Naive thymus-derived CD4-positive, alpha-beta T cell (primary cell): ENCODE measurements at regions of chr3 and their contacts with region 1.

Region 1: GRCh38 chr3:112086076-112086854 is at the start of gene C3orf52:
- DNase-seq: peak; percentile 37 to 84 (median 49)
- ATAC-seq: peak; percentile 89
- H3K4me3 ChIP-seq: peak within 1 kb of the TSS; percentile 64
- H3K4me3 Mint-ChIP-seq: peak within 1 kb of the TSS; percentile 81 to 91 (median 86)
- H3K27ac ChIP-seq: peak within 1 kb of the TSS; percentile 50
- H3K27ac Mint-ChIP-seq: peak within 1 kb of the TSS; percentile 25 to 89 (median 77)
- H3K4me1 ChIP-seq: peaks cover 8 to 10% of the 10 kb centered on the region in 2 donors
- H3K4me1 Mint-ChIP-seq: peaks cover 32 to 66% (median 46%) of the 10 kb centered on the region in 7 donors
- H3K27me3 ChIP-seq: no peaks in the 10 kb centered on the region
- H3K27me3 Mint-ChIP-seq: peaks cover 0 to 17% (median 3%) of the 10 kb centered on the region in 5 donors
- total RNA-seq, gene C3orf52: 1.2 to 12.3 (median 1.9) TPM

Region 2: GRCh38 chr3:111989061-111989678 is 97.1 kb before region 1 on chr3:
- CTCF ChIA-PET with region 1: no interaction called
- POLR2A ChIA-PET with region 1: no interaction called
- intact Hi-C with region 1: loop called in 1 of 2 experiments (anchors 1 kb)
- DNase-seq: peak in 3 of 9 donors; percentile 21 to 32 (median 32)
- ATAC-seq: peak; percentile 87
- H3K4me3 ChIP-seq: no peak overlapping the region
- H3K4me3 Mint-ChIP-seq: no peak overlapping the region
- H3K27ac ChIP-seq: no peak overlapping the region
- H3K27ac Mint-ChIP-seq: peak overlapping the region in 1 of 9 donors; percentile 30
- H3K4me1 ChIP-seq: no peaks in the 10 kb centered on the region
- H3K4me1 Mint-ChIP-seq: peaks cover 11 to 44% (median 35%) of the 10 kb centered on the region in 7 donors
- H3K27me3 ChIP-seq: no peaks in the 10 kb centered on the region
- H3K27me3 Mint-ChIP-seq: no peaks in the 10 kb centered on the region

Region 3: GRCh38 chr3:112043603-112044201 is 42.6 kb before region 1 on chr3:
- CTCF ChIA-PET with region 1: no interaction called
- POLR2A ChIA-PET with region 1: no interaction called
- intact Hi-C with region 1: loop called (anchors 1 to 5 kb)
- DNase-seq: peak in 8 of 9 donors; percentile 29 to 70 (median 58)
- ATAC-seq: peak; percentile 95
- H3K4me3 ChIP-seq: no peak overlapping the region
- H3K4me3 Mint-ChIP-seq: no peak overlapping the region
- H3K27ac ChIP-seq: no peak overlapping the region
- H3K27ac Mint-ChIP-seq: no peak overlapping the region
- H3K4me1 ChIP-seq: no peaks in the 10 kb centered on the region
- H3K4me1 Mint-ChIP-seq: no peaks in the 10 kb centered on the region
- H3K27me3 ChIP-seq: no peaks in the 10 kb centered on the region
- H3K27me3 Mint-ChIP-seq: peaks cover 0 to 3% (median 0%) of the 10 kb centered on the region in 5 donors

Region 4: DNA sequence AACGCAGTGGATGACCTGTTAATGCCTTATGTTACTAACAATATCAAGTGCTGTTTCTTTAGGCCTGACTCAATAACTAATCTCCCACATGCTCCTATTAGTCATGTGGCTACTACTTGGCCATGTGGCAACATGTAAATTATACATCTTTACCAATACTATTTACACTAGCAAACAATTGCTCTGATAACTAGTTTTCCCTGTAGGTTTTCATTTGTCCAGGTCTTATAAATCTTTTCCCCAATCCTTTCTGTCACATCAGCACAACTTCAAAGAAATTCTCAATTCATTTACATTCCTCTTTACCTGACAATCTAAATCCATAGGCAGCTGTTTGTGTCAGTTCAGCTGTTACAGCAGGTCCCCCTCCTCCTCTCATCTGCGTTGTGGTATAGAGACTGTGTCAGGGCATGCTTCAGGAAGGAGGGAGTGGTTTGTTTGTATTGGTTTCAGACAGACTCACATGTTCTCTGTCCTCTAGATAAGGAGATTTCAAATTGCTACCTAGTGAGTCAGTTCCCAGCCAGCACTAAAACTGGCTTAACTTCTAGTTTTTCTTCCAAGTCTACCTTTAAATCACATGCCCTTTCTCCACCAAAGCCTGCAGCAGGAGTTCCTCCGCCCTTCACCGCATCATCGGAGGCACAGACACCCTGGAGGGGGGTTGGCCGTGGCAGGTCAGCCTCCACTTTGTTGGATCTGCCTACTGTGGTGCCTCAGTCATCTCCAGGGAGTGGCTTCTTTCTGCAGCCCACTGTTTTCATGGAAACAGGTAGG is 11.4 kb before region 1 on chr3:
- CTCF ChIA-PET with region 1: no interaction called
- POLR2A ChIA-PET with region 1: interaction called, 6 read pairs
- intact Hi-C with region 1: loop called (anchors 1 kb)
- DNase-seq: peak in 8 of 9 donors; percentile 29 to 60 (median 52)
- ATAC-seq: peak; percentile 88
- H3K4me3 ChIP-seq: no peak overlapping the region
- H3K4me3 Mint-ChIP-seq: peak overlapping the region; percentile 32 to 76 (median 56)
- H3K27ac ChIP-seq: peak overlapping the region; percentile 32
- H3K27ac Mint-ChIP-seq: peak overlapping the region; percentile 72 to 95 (median 85)
- H3K4me1 ChIP-seq: peaks cover 4 to 17% of the 10 kb centered on the region in 2 donors
- H3K4me1 Mint-ChIP-seq: peaks cover 17 to 57% (median 51%) of the 10 kb centered on the region in 7 donors
- H3K27me3 ChIP-seq: no peaks in the 10 kb centered on the region
- H3K27me3 Mint-ChIP-seq: peaks cover 0 to 3% (median 0%) of the 10 kb centered on the region in 5 donors

Region 5: GRCh38 chr3:112101916-112102315 is 15.7 kb after region 1 on chr3:
- CTCF ChIA-PET with region 1: no interaction called
- POLR2A ChIA-PET with region 1: no interaction called
- intact Hi-C with region 1: loop called in 1 of 2 experiments (anchors 2 kb)
- DNase-seq: no peak
- ATAC-seq: no peak
- H3K4me3 ChIP-seq: no peak overlapping the region
- H3K4me3 Mint-ChIP-seq: no peak overlapping the region
- H3K27ac ChIP-seq: no peak overlapping the region
- H3K27ac Mint-ChIP-seq: no peak overlapping the region
- H3K4me1 ChIP-seq: no peaks in the 10 kb centered on the region
- H3K4me1 Mint-ChIP-seq: peaks cover 0 to 14% (median 0%) of the 10 kb centered on the region in 7 donors
- H3K27me3 ChIP-seq: no peaks in the 10 kb centered on the region
- H3K27me3 Mint-ChIP-seq: peaks cover 0 to 5% (median 0%) of the 10 kb centered on the region in 5 donors

Region 6: DNA sequence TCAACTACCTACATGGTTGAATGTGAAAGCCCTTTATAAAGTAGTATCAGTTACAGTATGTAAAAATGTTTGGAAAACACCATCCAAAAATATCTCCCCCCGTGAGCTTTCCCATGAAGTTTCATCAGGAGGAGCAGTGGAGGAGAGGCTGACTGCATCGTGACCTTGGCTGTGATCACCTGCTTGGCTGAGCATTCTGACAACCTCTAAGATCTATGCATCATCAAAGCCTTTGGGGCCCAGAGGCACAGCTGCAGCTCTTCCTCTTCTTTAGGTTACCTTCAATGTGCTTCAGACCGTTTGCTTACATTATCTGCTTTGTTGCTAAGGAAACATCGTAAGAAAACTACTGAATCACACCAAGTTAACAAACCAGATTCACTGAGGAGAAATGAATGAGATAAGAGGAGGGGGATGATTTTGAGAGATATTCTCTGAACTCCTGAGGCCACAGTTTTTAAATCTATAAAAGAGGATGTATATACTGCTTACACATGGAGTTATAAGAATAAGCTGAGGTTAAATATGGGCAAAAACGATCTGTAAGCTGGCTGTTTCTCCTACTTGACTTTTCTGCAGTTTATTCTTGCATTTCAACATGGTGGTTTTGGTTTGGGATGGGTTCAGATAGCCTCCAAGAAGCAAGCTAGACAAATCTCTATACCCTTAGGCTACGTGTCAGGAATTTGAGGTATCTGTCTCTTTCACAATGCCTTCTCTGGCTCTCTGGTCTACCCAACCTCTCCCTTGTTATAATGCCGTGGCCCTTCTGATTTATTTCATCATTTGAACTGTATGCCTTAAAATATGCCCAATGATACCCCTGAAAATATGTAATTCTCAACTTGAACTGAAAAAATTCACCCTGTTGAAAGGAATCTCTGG is 42.8 kb after region 1 on chr3:
- CTCF ChIA-PET with region 1: no interaction called
- POLR2A ChIA-PET with region 1: no interaction called
- intact Hi-C with region 1: loop called in 1 of 2 experiments (anchors 1 kb)
- DNase-seq: peak in 8 of 9 donors; percentile 39 to 88 (median 83)
- ATAC-seq: peak; percentile 82
- H3K4me3 ChIP-seq: no peak overlapping the region
- H3K4me3 Mint-ChIP-seq: peak overlapping the region; percentile 23 to 100 (median 64)
- H3K27ac ChIP-seq: peak overlapping the region; percentile 82
- H3K27ac Mint-ChIP-seq: peak overlapping the region; percentile 87 to 95 (median 93)
- H3K4me1 ChIP-seq: peaks cover 41 to 72% of the 10 kb centered on the region in 2 donors
- H3K4me1 Mint-ChIP-seq: peaks cover 49 to 92% (median 90%) of the 10 kb centered on the region in 7 donors
- H3K27me3 ChIP-seq: no peaks in the 10 kb centered on the region
- H3K27me3 Mint-ChIP-seq: no peaks in the 10 kb centered on the region